ENCODE measurements at regions of chr6 and their contacts with region 1.

Region 1: GRCh38 chr6:128663238-128663637 is 142.8 kb upstream of the PTPRK start:
- DNase-seq: no peak
- H3K4me3 ChIP-seq: no peak overlapping the region
- H3K27ac ChIP-seq: no peak overlapping the region
- H3K4me1 ChIP-seq: no peaks in the 10 kb centered on the region
- H3K27me3 ChIP-seq: no peaks in the 10 kb centered on the region
- CTCF ChIP-seq: no peak

Region 2: DNA sequence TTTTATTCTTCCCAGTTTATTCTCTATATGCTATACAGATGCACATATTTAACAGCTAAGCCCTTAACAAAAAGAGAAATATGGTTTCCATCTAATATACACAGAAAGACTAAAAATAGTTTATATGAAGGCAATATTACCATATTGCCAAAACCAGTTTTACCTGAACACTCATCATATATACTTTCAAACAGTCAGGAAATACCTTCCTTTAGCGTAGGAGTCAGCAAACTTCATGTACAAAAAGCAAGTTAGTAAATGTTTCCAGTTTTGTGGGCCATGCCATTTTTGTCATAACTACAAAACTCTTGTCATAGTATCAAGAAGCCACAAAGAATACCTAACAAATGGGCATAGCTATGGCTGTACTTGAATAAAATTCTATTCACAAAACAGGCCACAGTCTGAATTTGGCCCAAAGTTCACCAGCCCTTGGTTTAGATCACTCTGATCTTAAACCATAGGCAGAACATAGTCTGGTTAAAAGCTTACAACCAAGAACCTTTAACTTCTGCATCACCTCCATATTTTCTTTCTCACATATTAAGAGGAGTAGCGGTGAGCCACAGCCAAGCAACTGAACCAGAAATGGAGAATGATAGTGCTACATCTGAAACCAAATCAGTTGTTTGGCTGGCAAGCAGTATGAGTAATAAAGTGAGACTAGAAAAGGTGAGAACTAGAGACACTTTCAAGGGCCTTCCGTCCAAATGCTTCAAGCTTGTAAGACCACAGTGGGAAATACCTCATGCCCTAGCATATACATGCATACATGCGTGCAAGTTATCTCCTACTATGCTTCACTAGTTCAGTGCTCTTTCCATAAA is 259.4 kb before region 1 on chr6:
- intact Hi-C with region 1: no loop called
- DNase-seq: no peak
- H3K4me3 ChIP-seq: no peak overlapping the region
- H3K27ac ChIP-seq: no peak overlapping the region
- H3K4me1 ChIP-seq: peaks cover 0 to 20% (median 0%) of the 10 kb centered on the region in 4 donors
- H3K27me3 ChIP-seq: no peaks in the 10 kb centered on the region
- CTCF ChIP-seq: no peak

Region 3: DNA sequence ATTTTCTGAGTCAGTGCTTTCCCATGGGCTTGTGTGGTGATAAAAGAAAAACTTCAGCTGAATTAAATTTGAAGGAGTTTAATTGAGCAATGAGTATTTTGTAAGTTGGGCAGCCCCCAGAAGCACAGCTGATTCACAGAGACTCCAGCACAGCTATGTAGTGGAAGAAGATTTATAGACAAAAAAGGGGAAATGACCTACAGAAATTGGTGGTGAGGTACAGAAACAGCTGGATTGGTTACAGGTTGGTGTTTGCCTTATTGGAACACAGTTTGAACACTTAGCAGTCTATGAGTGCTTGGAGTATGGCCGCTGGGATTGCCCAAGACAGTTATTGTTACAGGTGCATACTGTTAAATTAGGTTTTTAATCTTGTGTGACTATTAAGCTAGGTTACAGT is 46.0 kb before region 1 on chr6:
- intact Hi-C with region 1: loop called (anchors 2 kb)
- DNase-seq: no peak
- H3K4me3 ChIP-seq: no peak overlapping the region
- H3K27ac ChIP-seq: no peak overlapping the region
- H3K4me1 ChIP-seq: no peaks in the 10 kb centered on the region
- H3K27me3 ChIP-seq: no peaks in the 10 kb centered on the region
- CTCF ChIP-seq: no peak

Region 4: DNA sequence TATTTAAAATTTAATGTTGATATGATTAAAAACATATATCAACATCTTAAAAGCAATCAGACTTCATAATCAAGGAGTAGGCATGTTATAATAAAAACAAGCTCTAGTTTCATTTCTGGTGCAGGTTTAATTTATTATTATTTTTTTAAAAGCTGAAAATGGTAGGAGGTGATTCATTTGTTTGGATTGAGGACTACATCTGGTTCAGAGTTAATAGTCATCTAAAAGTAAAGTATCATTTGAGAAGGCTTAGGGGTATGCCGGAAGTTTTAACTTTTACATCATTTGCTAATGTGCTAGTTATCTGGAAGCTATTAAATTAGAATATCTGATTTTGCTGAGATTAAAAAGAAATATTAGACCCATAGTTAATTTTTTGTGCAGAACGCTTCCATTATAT is 50.2 kb after region 1 on chr6:
- intact Hi-C with region 1: no loop called
- DNase-seq: no peak
- H3K4me3 ChIP-seq: no peak overlapping the region
- H3K27ac ChIP-seq: no peak overlapping the region
- H3K4me1 ChIP-seq: no peaks in the 10 kb centered on the region
- H3K27me3 ChIP-seq: no peaks in the 10 kb centered on the region
- CTCF ChIP-seq: no peak